ENCODE measurements at regions of chr20 and their contacts with region 1.

Region 1: DNA sequence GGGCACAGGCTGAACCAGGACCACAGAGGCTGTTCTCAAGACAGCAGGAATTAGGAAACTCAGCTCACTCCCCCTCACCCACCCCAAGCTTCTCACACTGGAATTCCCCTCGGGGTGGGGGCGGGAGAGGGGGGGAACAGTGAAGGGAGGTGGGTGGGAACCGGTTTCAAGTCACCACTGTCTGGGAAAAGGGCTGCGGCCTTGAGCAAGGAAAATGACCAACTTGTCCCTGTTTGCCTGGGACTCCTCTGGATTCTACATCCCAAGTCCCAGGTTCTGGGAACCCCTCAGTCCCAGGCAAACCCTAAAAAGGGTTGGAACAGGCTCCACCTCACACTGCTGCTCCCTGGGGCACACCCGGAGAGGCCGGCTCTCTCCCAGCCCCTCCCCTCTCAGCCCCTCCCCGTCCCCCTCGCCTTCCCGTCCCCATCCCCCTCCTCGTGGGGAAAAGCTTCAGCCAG is 230.7 kb downstream of the TFAP2C start:
- DNase-seq: no peak

Region 2: GRCh38 chr20:56373940-56374339 is 485.9 kb before region 1 on chr20:
- intact Hi-C with region 1: no loop called
- DNase-seq: no peak

Region 3: DNA sequence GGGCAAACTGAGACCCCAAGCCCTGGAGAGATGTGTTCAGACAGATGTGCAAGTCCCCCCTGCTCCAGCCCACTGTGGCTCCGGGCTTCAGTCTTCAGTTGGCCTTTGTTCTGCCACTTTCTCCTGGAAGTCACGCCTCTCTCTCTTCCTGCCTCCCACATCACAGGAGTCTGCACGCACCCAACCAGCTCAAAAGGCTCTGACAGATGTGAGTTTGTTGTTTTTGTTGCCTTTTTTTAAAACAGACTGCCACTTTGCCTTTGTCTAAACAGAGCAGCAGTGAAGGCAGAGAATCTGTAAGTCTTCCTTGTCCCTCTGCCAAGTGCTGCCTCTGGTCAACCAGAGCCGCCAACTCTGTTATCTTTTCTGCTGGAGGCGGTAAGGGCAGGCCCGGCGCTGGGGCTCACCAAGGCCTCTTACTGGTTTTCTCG is 81.1 kb before region 1 on chr20:
- intact Hi-C with region 1: no loop called
- DNase-seq: no peak

Region 4: GRCh38 chr20:57866221-57867106 is 1006.6 kb after region 1 on chr20:
- intact Hi-C with region 1: loop called in 1 of 2 experiments (anchors 5 kb)
- DNase-seq: no peak

Measured in posterior vena cava (tissue), 2 donors.